Panc1 (cell line): ENCODE measurements at regions of chr10 and their contacts with region 1.

Region 1: GRCh38 chr10:122098924-122099323 is 110.0 kb downstream of the TACC2 start:
- DNase-seq: no peak
- ATAC-seq: no peak
- H3K4me3 ChIP-seq: no peak overlapping the region
- H3K27ac ChIP-seq: peak overlapping the region; percentile 99
- H3K4me1 ChIP-seq: peaks cover 56% of the 10 kb centered on the region
- H3K27me3 ChIP-seq: no peaks in the 10 kb centered on the region
- CTCF ChIP-seq: no peak

Region 2: GRCh38 chr10:120573355-120573754 is 1525.6 kb before region 1 on chr10:
- CTCF ChIA-PET with region 1: interaction called, 11 read pairs
- POLR2A ChIA-PET with region 1: no interaction called
- in situ Hi-C with region 1: no loop called
- intact Hi-C with region 1: no loop called
- DNase-seq: no peak
- ATAC-seq: no peak
- H3K4me3 ChIP-seq: no peak overlapping the region
- H3K27ac ChIP-seq: no peak overlapping the region
- H3K4me1 ChIP-seq: no peaks in the 10 kb centered on the region
- H3K27me3 ChIP-seq: no peaks in the 10 kb centered on the region
- CTCF ChIP-seq: no peak